ENCODE measurements at regions of chr1 and their contacts with region 1.

Region 1: GRCh38 chr1:153626922-153627796 is at the start of gene S100A13:
- DNase-seq: no peak
- H3K4me3 ChIP-seq: peak within 1 kb of the TSS; percentile 48 to 68
- H3K27ac ChIP-seq: peak within 1 kb of the TSS; percentile 95
- H3K4me1 ChIP-seq: peaks cover 38% of the 10 kb centered on the region
- H3K27me3 ChIP-seq: no peaks in the 10 kb centered on the region
- CTCF ChIP-seq: peak in 1 of 3 experiments; percentile 13
- POLR2A ChIP-seq: peak in 1 of 2 donors; percentile 30
- total RNA-seq, gene S100A13: 116 TPM

Region 2: GRCh38 chr1:153532769-153533599 is 94.2 kb before region 1 on chr1:
- intact Hi-C with region 1: loop called (anchors 5 kb)
- DNase-seq: peak in 1 of 2 donors; percentile 96
- H3K4me3 ChIP-seq: peak overlapping the region; percentile 96 to 99
- H3K27ac ChIP-seq: peak overlapping the region; percentile 100
- H3K4me1 ChIP-seq: peaks cover 61% of the 10 kb centered on the region
- H3K27me3 ChIP-seq: no peaks in the 10 kb centered on the region
- CTCF ChIP-seq: peak; percentile 85 to 96 (median 92)
- POLR2A ChIP-seq: peak in 1 of 2 donors; percentile 37

Region 3: DNA sequence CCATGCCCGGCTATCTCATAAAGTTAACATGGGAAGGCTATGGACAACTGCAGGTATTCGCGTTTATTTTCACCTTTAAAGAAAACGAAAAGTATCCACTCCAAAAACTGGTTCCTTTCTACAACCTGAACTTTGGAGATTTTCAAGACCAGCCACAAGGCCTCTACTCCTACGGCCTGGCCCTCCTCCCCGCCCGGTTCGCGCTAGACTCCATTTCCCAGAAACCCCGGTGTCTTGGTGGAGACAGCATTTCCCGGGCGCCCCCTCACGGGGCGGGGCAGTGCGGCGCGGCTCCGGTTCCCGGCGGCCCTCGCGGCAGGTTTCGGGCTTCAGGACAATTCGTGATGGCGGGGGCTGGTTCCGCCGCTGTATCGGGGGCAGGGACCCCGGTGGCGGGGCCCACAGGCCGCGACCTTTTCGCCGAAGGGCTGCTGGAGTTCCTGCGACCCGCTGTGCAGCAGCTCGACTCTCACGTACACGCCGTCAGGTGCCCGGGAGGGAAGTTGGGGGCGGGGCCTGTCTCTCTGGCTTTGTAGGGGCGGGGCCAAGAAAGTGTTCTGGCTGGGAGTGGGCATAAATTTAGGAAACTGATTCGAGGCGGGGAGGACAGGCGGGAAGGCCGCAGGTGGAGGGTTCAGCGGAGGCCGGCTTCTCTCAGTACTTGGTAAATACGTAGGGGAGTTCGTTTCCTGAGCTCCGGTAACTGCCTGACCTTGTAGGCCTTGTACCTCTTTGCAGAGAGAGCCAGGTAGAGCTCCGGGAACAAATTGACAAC is 31.4 kb after region 1 on chr1 and contains the start of gene SNAPIN:
- intact Hi-C with region 1: no loop called
- DNase-seq: no peak
- H3K4me3 ChIP-seq: peak within 1 kb of the TSS; percentile 76 to 78
- H3K27ac ChIP-seq: peak within 1 kb of the TSS; percentile 97
- H3K4me1 ChIP-seq: peaks cover 12% of the 10 kb centered on the region
- H3K27me3 ChIP-seq: no peaks in the 10 kb centered on the region
- CTCF ChIP-seq: no peak
- POLR2A ChIP-seq: peak in 1 of 2 donors; percentile 24
- total RNA-seq, gene SNAPIN: 43.2 TPM